Thyroid gland (tissue), 4 donors: ENCODE measurements at regions of chr1 and their contacts with region 1.

Region 1: DNA sequence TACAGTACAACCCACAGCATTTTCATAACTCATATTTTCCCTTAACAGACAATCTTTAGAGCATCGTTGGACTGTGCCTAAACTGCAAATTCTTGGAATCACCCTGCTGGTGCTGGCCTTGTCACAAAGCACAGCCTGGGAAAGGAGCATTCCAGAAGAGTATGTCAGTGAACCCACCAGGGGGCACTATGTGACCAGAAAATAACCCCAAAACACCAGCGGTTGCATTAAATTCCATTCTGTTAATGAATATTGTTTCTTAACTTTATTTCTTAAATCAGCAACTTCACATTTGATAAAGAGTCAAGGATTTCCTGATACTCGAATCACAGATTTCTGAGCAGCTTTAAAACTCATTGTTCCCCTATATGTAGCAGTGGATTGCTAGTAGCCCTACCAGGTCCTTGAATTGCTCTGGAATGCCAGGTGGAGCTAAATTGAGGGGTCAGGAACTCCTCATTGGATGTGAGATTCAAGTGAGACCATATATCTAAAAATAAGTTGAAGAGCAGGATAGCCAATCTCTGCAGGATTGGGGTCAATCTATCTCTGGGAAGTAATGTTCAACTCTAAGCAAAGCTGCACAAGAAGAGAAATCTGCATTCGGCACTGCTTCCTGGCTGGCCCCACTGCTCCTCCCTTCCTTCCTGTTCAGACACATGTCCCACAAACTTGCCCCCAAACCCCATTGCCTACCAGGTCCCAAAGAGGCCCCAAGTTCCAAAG is 12.7 kb upstream of the RAB4A start:
- DNase-seq: peak; percentile 60 to 63
- H3K4me3 ChIP-seq: no peak overlapping the region
- H3K27ac ChIP-seq: no peak overlapping the region
- H3K4me1 ChIP-seq: peaks cover 0 to 4% of the 10 kb centered on the region in 2 donors
- H3K27me3 ChIP-seq: no peaks in the 10 kb centered on the region
- CTCF ChIP-seq: peak; percentile 58 to 92 (median 79)
- POLR2A ChIP-seq: no peak

Region 2: GRCh38 chr1:228664399-228664914 is 593.7 kb before region 1 on chr1:
- intact Hi-C with region 1: loop called (anchors 5 kb)
- DNase-seq: peak; percentile 76 to 85
- H3K4me3 ChIP-seq: no peak overlapping the region
- H3K27ac ChIP-seq: no peak overlapping the region
- H3K4me1 ChIP-seq: no peaks in the 10 kb centered on the region
- H3K27me3 ChIP-seq: no peaks in the 10 kb centered on the region
- CTCF ChIP-seq: peak; percentile 40 to 88 (median 84)
- POLR2A ChIP-seq: no peak

Region 3: DNA sequence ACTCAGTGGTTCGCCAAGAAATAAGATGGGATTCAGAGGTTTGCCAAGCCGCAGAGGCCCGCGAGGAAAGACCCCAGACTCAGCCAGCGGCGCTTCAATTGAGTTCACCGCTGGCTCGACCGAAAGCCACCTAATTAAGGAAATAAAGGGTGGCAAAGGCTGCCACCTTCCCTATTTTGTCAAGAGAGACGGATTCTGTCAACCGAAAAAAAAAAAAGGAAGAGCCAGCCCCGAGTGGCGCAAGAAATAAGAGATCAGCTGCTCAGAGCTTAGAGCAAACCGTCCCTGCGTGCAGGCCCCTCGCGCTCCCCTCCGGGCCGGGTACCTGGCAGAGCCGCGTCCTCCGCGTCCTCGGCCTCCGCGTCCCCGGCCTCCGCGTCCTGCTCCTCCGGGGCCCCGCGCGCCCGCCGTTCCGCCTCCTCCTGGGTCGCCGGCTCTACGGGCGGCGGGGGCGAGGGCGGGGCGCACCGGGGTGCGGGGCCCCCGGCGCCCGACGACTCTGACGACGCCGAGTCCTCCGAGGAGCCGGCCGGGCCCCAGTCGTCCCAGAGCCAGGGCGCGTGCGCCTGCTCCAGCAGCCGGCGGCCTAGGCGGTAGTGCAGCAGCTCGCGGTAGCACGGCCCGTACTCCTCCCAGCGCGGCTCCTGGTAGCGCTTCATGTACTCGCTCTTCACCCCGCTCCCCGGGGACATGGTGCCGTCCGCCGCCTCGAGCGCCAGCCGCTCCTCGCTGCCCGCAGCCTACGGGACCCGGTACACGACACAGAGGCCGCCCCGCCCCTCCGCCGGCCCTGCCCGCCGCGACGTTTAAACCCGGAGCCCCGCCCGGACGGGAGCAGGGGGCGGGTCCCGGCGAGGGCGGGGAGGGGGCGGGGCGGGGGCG is 83.8 kb after region 1 on chr1:
- intact Hi-C with region 1: loop called (anchors 10 kb)
- DNase-seq: peak; percentile 83 to 84
- H3K4me3 ChIP-seq: peak overlapping the region; percentile 78 to 86 (median 83)
- H3K27ac ChIP-seq: peak overlapping the region; percentile 69 to 70 (median 70)
- H3K4me1 ChIP-seq: peaks cover 0 to 9% of the 10 kb centered on the region in 2 donors
- H3K27me3 ChIP-seq: no peaks in the 10 kb centered on the region
- CTCF ChIP-seq: no peak
- POLR2A ChIP-seq: peak in 1 of 2 donors; percentile 72

Region 4: GRCh38 chr1:229479660-229480399 is 221.6 kb after region 1 on chr1:
- intact Hi-C with region 1: loop called (anchors 5 kb)
- DNase-seq: peak; percentile 15 to 18
- H3K4me3 ChIP-seq: no peak overlapping the region
- H3K27ac ChIP-seq: no peak overlapping the region
- H3K4me1 ChIP-seq: no peaks in the 10 kb centered on the region
- H3K27me3 ChIP-seq: no peaks in the 10 kb centered on the region
- CTCF ChIP-seq: no peak
- POLR2A ChIP-seq: no peak

Region 5: DNA sequence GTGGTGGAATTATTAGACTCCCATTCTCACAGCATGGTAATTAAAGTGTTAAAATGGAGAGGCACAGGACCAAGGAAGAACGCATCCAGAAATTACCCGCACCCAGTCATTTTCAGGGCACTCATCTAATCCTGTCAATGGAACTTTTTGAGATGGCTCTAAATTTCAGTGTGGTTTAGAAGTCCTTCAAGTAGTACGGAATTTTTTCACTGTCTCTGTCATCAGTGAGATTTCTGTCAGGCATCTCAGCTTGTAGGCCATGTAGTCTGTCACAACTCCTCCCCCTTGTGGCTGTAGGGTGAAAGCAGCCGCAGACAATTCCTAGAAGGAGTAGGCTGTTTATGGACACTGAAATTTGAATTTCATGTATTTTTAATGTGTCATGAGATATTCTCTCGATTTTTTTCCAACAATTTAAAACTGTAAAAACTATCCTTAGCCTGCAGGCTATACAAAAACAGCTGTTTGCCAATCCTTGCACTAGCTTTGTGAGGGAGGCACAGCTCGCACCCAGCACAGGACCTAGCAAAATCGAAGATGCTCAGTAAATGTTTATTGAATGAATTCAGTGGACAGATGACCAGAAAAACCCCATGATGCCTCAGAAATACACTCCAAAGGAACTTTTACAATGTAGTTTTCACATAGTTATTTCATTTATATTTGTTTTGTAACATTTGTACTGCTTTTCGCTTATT is 256.5 kb after region 1 on chr1:
- intact Hi-C with region 1: loop called (anchors 10 kb)
- DNase-seq: peak; percentile 56 to 63
- H3K4me3 ChIP-seq: no peak overlapping the region
- H3K27ac ChIP-seq: no peak overlapping the region
- H3K4me1 ChIP-seq: no peaks in the 10 kb centered on the region
- H3K27me3 ChIP-seq: no peaks in the 10 kb centered on the region
- CTCF ChIP-seq: peak; percentile 36 to 81 (median 58)
- POLR2A ChIP-seq: no peak